CD14-positive monocyte (primary cell): ENCODE measurements at regions of chr4 and their contacts with region 1.

Region 1: GRCh38 chr4:86895692-86896488 is 3.7 kb upstream of the C4orf36 start:
- DNase-seq: peak; percentile 33 to 61 (median 53)
- H3K4me3 ChIP-seq: no peak overlapping the region
- H3K4me3 Mint-ChIP-seq: no peak overlapping the region
- H3K27ac ChIP-seq: no peak overlapping the region
- H3K27ac Mint-ChIP-seq: no peak overlapping the region
- H3K4me1 ChIP-seq: peaks cover 11 to 25% of the 10 kb centered on the region in 2 donors
- H3K4me1 Mint-ChIP-seq: peaks cover 17% of the 10 kb centered on the region
- H3K27me3 ChIP-seq: peaks cover 8 to 20% of the 10 kb centered on the region in 2 donors
- H3K27me3 Mint-ChIP-seq: peaks cover 21 to 24% (median 22%) of the 10 kb centered on the region in 3 donors
- CTCF ChIP-seq: peak; percentile 88

Region 2: GRCh38 chr4:86497980-86498862 is 397.7 kb before region 1 on chr4:
- intact Hi-C with region 1: loop called (anchors 2 kb)
- DNase-seq: peak in 2 of 3 donors; percentile 33 to 36
- H3K4me3 ChIP-seq: no peak overlapping the region
- H3K4me3 Mint-ChIP-seq: no peak overlapping the region
- H3K27ac ChIP-seq: no peak overlapping the region
- H3K27ac Mint-ChIP-seq: no peak overlapping the region
- H3K4me1 ChIP-seq: peaks cover 0 to 6% of the 10 kb centered on the region in 2 donors
- H3K4me1 Mint-ChIP-seq: peaks cover 8% of the 10 kb centered on the region
- H3K27me3 ChIP-seq: no peaks in the 10 kb centered on the region
- H3K27me3 Mint-ChIP-seq: peaks cover 0 to 5% (median 3%) of the 10 kb centered on the region in 3 donors
- CTCF ChIP-seq: peak; percentile 92

Region 3: DNA sequence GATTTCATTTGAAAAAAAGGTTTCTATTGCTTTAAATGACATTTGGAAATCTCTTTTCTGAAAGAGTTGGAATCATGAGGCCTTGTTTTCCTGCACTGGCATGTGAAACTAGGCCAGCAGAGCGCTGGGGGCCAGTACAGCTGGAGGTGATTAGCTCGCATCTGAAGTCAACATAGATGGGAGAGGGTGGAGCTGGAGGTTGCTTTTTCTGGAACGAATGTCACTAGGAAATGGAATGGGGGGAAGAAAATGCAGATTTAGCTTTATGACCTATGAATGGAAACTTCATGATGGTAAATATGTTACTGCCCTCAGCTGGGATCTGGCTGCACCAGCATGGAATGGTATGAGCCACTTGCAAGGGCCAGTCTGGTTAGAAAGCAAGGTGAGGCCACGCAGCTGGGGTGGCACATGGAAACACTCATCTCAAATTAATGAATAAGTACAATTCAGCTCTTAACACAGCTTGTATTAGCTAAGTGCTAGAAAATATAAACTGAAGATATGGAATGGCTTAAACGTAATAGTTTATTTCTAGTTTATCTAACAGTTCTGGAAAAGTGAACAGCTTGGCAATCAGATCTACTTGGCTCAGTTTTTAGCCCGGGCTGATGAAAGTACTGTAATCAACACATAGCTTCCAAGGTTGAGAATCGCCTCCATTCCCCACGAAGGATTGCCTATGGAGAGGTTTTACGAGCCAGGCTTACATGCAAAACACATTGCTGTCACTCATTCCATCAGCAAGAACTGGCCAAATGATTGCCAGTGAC is 79.2 kb before region 1 on chr4:
- intact Hi-C with region 1: no loop called
- DNase-seq: no peak
- H3K4me3 ChIP-seq: no peak overlapping the region
- H3K4me3 Mint-ChIP-seq: no peak overlapping the region
- H3K27ac ChIP-seq: no peak overlapping the region
- H3K27ac Mint-ChIP-seq: no peak overlapping the region
- H3K4me1 ChIP-seq: no peaks in the 10 kb centered on the region
- H3K4me1 Mint-ChIP-seq: no peaks in the 10 kb centered on the region
- H3K27me3 ChIP-seq: no peaks in the 10 kb centered on the region
- H3K27me3 Mint-ChIP-seq: no peaks in the 10 kb centered on the region
- CTCF ChIP-seq: no peak

Region 4: DNA sequence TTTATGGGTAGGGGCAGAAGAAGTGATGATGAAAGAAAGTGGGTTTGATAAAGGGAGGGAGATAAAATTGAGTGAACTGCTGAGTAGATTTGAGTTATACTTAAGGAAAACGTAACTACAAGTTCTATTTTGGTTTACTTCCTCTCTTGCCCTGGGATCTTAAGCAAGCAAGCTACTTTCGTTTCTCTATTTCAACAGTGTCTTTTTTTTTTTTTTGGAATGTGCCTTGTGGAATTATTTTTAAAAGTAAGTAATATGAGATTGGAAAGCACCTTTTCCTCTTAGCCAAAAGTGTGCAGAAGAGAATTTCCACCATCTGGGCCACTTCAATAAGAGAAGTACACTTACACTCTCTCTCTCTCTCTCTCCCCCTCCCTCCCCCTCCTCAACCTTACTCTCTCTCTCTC is 12.4 kb after region 1 on chr4:
- intact Hi-C with region 1: loop called in 1 of 2 experiments (anchors 2 kb)
- DNase-seq: peak; percentile 71 to 80 (median 73)
- H3K4me3 ChIP-seq: peak overlapping the region in 1 of 3 experiments; percentile 59
- H3K4me3 Mint-ChIP-seq: peak overlapping the region; percentile 54 to 62
- H3K27ac ChIP-seq: peak overlapping the region; percentile 83 to 86
- H3K27ac Mint-ChIP-seq: peak overlapping the region; percentile 90 to 97 (median 94)
- H3K4me1 ChIP-seq: peaks cover 64 to 69% of the 10 kb centered on the region in 2 donors
- H3K4me1 Mint-ChIP-seq: peaks cover 56% of the 10 kb centered on the region
- H3K27me3 ChIP-seq: no peaks in the 10 kb centered on the region
- H3K27me3 Mint-ChIP-seq: no peaks in the 10 kb centered on the region
- CTCF ChIP-seq: no peak

Region 5: DNA sequence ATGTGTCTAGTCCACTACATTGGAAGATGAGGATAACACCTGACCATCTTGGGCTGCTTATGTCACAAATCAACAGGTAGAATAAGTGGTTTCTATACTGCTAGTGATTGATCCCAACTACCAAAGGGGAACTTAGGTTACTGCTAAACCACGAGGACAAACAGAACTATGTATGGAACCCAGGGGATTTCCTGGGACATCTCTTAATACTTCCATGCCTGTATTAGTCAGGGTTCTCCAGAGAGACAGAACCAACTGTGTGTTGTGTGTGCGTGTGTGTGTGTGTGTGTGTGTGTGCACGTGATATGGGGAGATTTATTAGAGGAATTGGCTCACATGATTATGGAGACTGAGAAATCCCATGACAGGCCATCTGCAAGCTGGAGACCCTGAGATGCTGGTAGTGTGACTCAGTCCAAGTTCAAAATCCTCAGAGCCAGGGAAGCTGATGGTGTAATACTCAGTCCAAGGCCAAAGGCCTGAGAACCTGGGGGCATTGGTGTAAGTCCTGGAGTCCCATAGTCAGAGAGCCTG is 22.7 kb after region 1 on chr4:
- intact Hi-C with region 1: loop called in 1 of 2 experiments (anchors 2 kb)
- DNase-seq: peak; percentile 44 to 93 (median 63)
- H3K4me3 ChIP-seq: no peak overlapping the region
- H3K4me3 Mint-ChIP-seq: no peak overlapping the region
- H3K27ac ChIP-seq: peak overlapping the region in 1 of 2 donors; percentile 36
- H3K27ac Mint-ChIP-seq: peak overlapping the region in 4 of 7 donors; percentile 20 to 80 (median 46)
- H3K4me1 ChIP-seq: peaks cover 35 to 53% of the 10 kb centered on the region in 2 donors
- H3K4me1 Mint-ChIP-seq: peaks cover 53% of the 10 kb centered on the region
- H3K27me3 ChIP-seq: no peaks in the 10 kb centered on the region
- H3K27me3 Mint-ChIP-seq: no peaks in the 10 kb centered on the region
- CTCF ChIP-seq: no peak